Activated CD4-positive, alpha-beta memory T cell treated with anti-CD3 and anti-CD28 coated beads for 36 hours (primary cell): ENCODE measurements at regions of chr11 and their contacts with region 1.

Region 1: GRCh38 chr11:83007909-83008580 is 63.7 kb downstream of the RAB30 start:
- DNase-seq: no peak
- H3K4me3 Mint-ChIP-seq: no peak overlapping the region
- H3K27ac Mint-ChIP-seq: no peak overlapping the region
- H3K4me1 Mint-ChIP-seq: peaks cover 34% of the 10 kb centered on the region
- H3K27me3 Mint-ChIP-seq: no peaks in the 10 kb centered on the region

Region 2: DNA sequence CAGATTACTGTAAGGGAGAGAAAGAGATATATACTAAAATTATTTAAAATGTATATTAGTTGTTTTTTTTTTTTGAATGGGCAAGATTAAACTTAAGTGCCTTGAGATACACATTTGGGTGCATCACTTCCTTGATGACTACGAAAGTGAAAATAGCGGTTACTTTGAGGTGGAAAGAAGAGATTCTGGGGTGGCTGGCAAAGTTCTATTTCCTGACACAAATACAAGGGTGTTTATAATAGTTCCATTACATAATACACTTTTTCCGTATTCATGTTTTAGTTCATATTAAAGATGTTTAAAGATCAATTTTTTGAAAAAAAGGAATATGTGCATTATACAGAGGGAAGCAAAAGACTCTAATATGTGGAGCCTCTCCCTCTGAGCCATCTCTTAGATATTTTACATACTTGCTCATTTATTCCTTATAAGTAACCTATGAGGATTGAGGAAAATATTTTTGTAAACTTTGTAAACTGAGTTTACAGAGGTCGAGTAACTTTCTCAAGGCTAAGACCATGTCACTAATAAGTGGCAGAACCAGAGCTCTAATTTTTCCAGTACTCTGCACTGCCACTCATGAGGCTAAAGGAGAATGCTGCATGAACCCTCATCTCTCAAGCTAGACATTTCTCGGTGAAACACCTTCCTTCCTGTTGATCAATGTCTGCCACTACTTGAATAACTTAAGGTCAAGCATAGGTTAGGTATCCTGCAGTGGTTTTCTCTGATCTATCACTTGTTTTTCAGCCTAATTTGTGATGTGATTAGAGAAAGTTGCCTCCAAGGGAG is 47.9 kb before region 1 on chr11:
- CTCF ChIA-PET with region 1: interaction called, 5 read pairs
- POLR2A ChIA-PET with region 1: no interaction called
- intact Hi-C with region 1: loop called (anchors 1 kb)
- DNase-seq: peak; percentile 33
- H3K4me3 Mint-ChIP-seq: peak overlapping the region; percentile 4
- H3K27ac Mint-ChIP-seq: peak overlapping the region; percentile 67
- H3K4me1 Mint-ChIP-seq: peaks cover 65% of the 10 kb centered on the region
- H3K27me3 Mint-ChIP-seq: no peaks in the 10 kb centered on the region

Region 3: DNA sequence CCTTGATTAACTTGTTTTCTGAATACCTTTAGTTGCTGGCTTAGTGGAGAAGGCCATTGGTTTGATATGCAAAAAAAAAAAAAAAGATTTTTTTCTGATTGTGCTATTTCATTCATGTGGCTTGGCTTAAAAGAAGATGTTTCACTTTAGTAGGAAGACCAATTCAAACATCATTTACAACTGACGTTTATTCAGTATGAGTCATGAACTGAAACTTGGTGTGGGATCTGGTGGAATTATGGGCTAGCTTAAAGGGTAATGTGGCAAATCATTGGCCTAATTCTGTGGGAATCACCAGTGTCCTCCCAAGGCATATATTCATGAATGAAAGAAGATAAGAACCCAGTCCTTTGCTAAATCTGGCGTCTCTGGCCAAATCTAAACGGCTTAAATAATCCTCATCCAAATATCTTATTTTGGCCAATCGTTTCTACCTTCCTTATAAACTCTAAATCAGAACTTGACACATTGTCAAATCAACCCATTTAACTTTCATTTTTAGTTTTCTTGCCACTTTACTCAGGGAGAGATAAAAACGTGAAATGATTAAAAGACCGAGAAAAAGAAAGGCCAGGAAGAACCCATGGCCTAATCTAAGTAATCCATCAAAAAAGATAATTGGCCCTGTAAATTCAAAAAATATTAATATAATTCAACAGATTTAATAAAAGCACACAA is 29.5 kb before region 1 on chr11:
- CTCF ChIA-PET with region 1: interaction called, 3 read pairs
- POLR2A ChIA-PET with region 1: interaction called, 9 read pairs
- intact Hi-C with region 1: loop called (anchors 1 kb)
- DNase-seq: no peak
- H3K4me3 Mint-ChIP-seq: no peak overlapping the region
- H3K27ac Mint-ChIP-seq: peak overlapping the region; percentile 16
- H3K4me1 Mint-ChIP-seq: peaks cover 38% of the 10 kb centered on the region
- H3K27me3 Mint-ChIP-seq: no peaks in the 10 kb centered on the region

Region 4: GRCh38 chr11:83063073-83063754 is 55.2 kb after region 1 on chr11:
- CTCF ChIA-PET with region 1: interaction called, 3 read pairs
- POLR2A ChIA-PET with region 1: no interaction called
- intact Hi-C with region 1: loop called (anchors 2 kb)
- DNase-seq: peak; percentile 28
- H3K4me3 Mint-ChIP-seq: peak overlapping the region; percentile 71
- H3K27ac Mint-ChIP-seq: peak overlapping the region; percentile 93
- H3K4me1 Mint-ChIP-seq: peaks cover 44% of the 10 kb centered on the region
- H3K27me3 Mint-ChIP-seq: no peaks in the 10 kb centered on the region

Region 5: DNA sequence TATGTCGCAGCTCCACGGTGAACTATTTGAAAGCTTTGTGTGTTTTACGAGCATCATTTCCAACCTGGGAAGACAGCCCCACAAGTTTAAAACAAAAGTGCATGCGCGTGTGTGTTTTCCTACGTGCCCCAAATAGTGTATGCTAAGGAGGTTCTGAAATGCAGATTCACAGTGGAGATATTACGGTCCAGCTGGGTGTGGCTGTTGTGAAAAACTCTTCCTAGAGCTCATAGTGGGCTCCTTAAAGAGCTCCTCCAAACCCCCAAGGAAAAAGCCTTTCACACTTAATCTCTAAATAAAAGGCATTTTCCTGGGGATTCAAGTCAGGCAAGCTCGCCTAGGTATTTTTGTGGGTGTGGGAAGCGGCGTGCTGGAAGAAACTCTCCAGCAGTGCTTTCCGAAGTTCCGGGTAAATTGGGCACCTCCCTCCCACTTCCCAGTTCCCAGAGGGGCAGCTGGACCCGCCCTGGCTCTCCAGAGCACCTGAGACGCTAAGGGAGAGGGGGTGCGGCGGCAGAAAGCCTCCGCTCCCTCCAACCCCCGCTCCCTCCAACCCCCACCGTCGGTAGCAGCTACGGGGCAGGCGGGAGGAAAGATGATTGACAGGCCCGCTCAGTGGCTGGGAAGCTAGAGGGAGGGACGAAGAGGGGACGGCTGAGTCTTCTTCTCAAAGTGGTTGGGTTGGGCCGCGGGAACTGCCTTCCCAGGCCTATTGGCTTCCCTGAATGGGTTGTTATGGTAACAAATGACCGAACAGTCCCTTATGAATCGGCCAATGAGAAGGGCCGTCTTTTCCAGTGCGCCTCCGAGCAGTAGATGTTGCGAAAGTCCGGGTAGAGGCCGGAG is 148.3 kb after region 1 on chr11:
- CTCF ChIA-PET with region 1: interaction called, 5 read pairs
- POLR2A ChIA-PET with region 1: interaction called, 21 read pairs
- intact Hi-C with region 1: no loop called
- DNase-seq: peak; percentile 99
- H3K4me3 Mint-ChIP-seq: peak overlapping the region; percentile 100
- H3K27ac Mint-ChIP-seq: peak overlapping the region; percentile 100
- H3K4me1 Mint-ChIP-seq: peaks cover 20% of the 10 kb centered on the region
- H3K27me3 Mint-ChIP-seq: no peaks in the 10 kb centered on the region